Activated CD4-positive, alpha-beta T cell treated with anti-CD3 and anti-CD28 coated beads for 36 hours (primary cell): ENCODE measurements at regions of chr21 and their contacts with region 1.

Region 1: GRCh38 chr21:17679002-17679600 is 66.4 kb upstream of the BTG3 start:
- DNase-seq: peak; percentile 5
- ATAC-seq: peak; percentile 70
- H3K4me3 Mint-ChIP-seq: no peak overlapping the region
- H3K27ac Mint-ChIP-seq: no peak overlapping the region
- H3K4me1 Mint-ChIP-seq: no peaks in the 10 kb centered on the region
- H3K27me3 Mint-ChIP-seq: no peaks in the 10 kb centered on the region

Region 2: GRCh38 chr21:17387030-17387617 is 292.0 kb before region 1 on chr21:
- CTCF ChIA-PET with region 1: no interaction called
- POLR2A ChIA-PET with region 1: no interaction called
- intact Hi-C with region 1: loop called in 1 of 2 experiments (anchors 5 kb)
- DNase-seq: peak; percentile 65
- ATAC-seq: peak; percentile 30
- H3K4me3 Mint-ChIP-seq: no peak overlapping the region
- H3K27ac Mint-ChIP-seq: no peak overlapping the region
- H3K4me1 Mint-ChIP-seq: no peaks in the 10 kb centered on the region
- H3K27me3 Mint-ChIP-seq: peaks cover 3% of the 10 kb centered on the region

Region 3: GRCh38 chr21:17611414-17612022 is 67.6 kb before region 1 on chr21:
- CTCF ChIA-PET with region 1: no interaction called
- POLR2A ChIA-PET with region 1: no interaction called
- intact Hi-C with region 1: loop called in 1 of 2 experiments (anchors 10 kb)
- DNase-seq: peak; percentile 91
- ATAC-seq: peak; percentile 64
- H3K4me3 Mint-ChIP-seq: peak overlapping the region; percentile 75
- H3K27ac Mint-ChIP-seq: peak overlapping the region; percentile 94
- H3K4me1 Mint-ChIP-seq: peaks cover 35% of the 10 kb centered on the region
- H3K27me3 Mint-ChIP-seq: no peaks in the 10 kb centered on the region

Region 4: GRCh38 chr21:17688912-17689874 is 10.1 kb after region 1 on chr21:
- CTCF ChIA-PET with region 1: interaction called, 28 read pairs
- POLR2A ChIA-PET with region 1: no interaction called
- intact Hi-C with region 1: no loop called
- DNase-seq: peak; percentile 64
- ATAC-seq: peak; percentile 26
- H3K4me3 Mint-ChIP-seq: no peak overlapping the region
- H3K27ac Mint-ChIP-seq: no peak overlapping the region
- H3K4me1 Mint-ChIP-seq: peaks cover 35% of the 10 kb centered on the region
- H3K27me3 Mint-ChIP-seq: peaks cover 2% of the 10 kb centered on the region

Region 5: GRCh38 chr21:17780539-17780938 is 101.4 kb after region 1 on chr21:
- CTCF ChIA-PET with region 1: no interaction called
- POLR2A ChIA-PET with region 1: no interaction called
- intact Hi-C with region 1: no loop called
- DNase-seq: peak; percentile 51
- ATAC-seq: peak; percentile 20
- H3K4me3 Mint-ChIP-seq: peak overlapping the region; percentile 3
- H3K27ac Mint-ChIP-seq: peak overlapping the region; percentile 73
- H3K4me1 Mint-ChIP-seq: peaks cover 87% of the 10 kb centered on the region
- H3K27me3 Mint-ChIP-seq: no peaks in the 10 kb centered on the region

Region 6: GRCh38 chr21:17903029-17903806 is 224.1 kb after region 1 on chr21:
- CTCF ChIA-PET with region 1: interaction called, 14 read pairs
- POLR2A ChIA-PET with region 1: no interaction called
- intact Hi-C with region 1: loop called (anchors 1 kb)
- DNase-seq: no peak
- ATAC-seq: no peak
- H3K4me3 Mint-ChIP-seq: no peak overlapping the region
- H3K27ac Mint-ChIP-seq: no peak overlapping the region
- H3K4me1 Mint-ChIP-seq: peaks cover 4% of the 10 kb centered on the region
- H3K27me3 Mint-ChIP-seq: no peaks in the 10 kb centered on the region

Region 7: GRCh38 chr21:17925000-17925610 is 246.0 kb after region 1 on chr21:
- CTCF ChIA-PET with region 1: interaction called, 23 read pairs
- POLR2A ChIA-PET with region 1: interaction called, 4 read pairs
- intact Hi-C with region 1: loop called (anchors 1 kb)
- DNase-seq: peak; percentile 67
- ATAC-seq: peak; percentile 96
- H3K4me3 Mint-ChIP-seq: no peak overlapping the region
- H3K27ac Mint-ChIP-seq: no peak overlapping the region
- H3K4me1 Mint-ChIP-seq: no peaks in the 10 kb centered on the region
- H3K27me3 Mint-ChIP-seq: no peaks in the 10 kb centered on the region